ENCODE measurements at regions of chr1 and their contacts with region 1.

Region 1: GRCh38 chr1:15680621-15681345 is 3.3 kb upstream of the PLEKHM2 start:
- DNase-seq: no peak
- H3K4me3 ChIP-seq: no peak overlapping the region
- H3K27ac ChIP-seq: no peak overlapping the region
- H3K4me1 ChIP-seq: peaks cover 0 to 3% (median 0%) of the 10 kb centered on the region in 4 experiments; a peak in 2 of 7 replicates
- H3K27me3 ChIP-seq: no peaks in the 10 kb centered on the region
- CTCF ChIP-seq: no peak
- EP300 ChIP-seq: no peak
- POLR2A ChIP-seq: no peak
- RAD21 ChIP-seq: no peak

Region 2: GRCh38 chr1:15663925-15664324 is 16.9 kb before region 1 on chr1:
- CTCF ChIA-PET with region 1: interaction called, 10 read pairs
- POLR2A ChIA-PET with region 1: interaction called, 6 read pairs
- DNase-seq: no peak
- H3K4me3 ChIP-seq: no peak overlapping the region
- H3K27ac ChIP-seq: no peak overlapping the region
- H3K4me1 ChIP-seq: peaks cover 0 to 5% (median 0%) of the 10 kb centered on the region in 4 experiments; a peak in 1 of 7 replicates
- H3K27me3 ChIP-seq: no peaks in the 10 kb centered on the region
- CTCF ChIP-seq: no peak
- EP300 ChIP-seq: no peak
- POLR2A ChIP-seq: no peak
- RAD21 ChIP-seq: no peak